Transverse colon (tissue), 4 donors: ENCODE measurements at regions of chr3 and their contacts with region 1.

Region 1: GRCh38 chr3:52231502-52232293 is 6.3 kb upstream of the TLR9 start:
- DNase-seq: peak; percentile 86
- H3K4me3 ChIP-seq: no peak overlapping the region
- H3K27ac ChIP-seq: no peak overlapping the region
- H3K4me1 ChIP-seq: peaks cover 4 to 10% (median 7%) of the 10 kb centered on the region in 4 donors
- H3K27me3 ChIP-seq: no peaks in the 10 kb centered on the region
- CTCF ChIP-seq: peak; percentile 89 to 95 (median 93)
- EP300 ChIP-seq: no peak
- POLR2A ChIP-seq: no peak

Region 2: DNA sequence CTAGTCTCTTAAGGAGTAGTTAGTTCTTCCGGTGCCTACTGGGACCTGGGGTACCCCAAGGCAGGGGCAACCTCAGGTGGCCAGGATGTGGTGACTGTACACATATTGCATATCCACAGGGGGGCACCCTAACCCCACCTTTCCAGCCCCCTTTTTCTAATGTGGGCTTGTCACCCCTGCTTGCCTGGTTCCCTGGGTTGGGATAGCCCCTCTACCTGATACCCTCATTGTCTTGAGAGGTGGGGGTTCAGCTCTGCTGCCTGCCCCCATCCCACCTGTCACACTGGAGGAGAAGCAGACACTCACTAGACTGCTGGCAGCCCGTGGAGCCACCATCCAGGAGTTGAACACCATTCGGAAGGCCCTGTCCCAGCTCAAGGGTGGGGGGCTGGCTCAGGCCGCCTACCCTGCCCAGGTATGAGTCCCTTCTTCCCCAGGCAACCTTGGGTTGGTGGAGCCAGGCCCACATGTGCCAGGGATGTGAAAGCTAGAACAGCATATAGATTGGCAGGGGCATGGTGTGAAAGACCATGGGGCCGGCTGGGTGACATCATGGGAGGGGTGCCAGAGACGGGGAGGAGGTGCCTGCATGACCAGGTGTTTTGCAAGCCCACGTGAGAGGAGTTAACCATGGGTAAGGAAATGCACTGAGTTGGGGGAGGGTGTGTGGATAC is 59.9 kb after region 1 on chr3:
- in situ Hi-C with region 1: loop called in 2 of 4 experiments (anchors 5 to 10 kb)
- intact Hi-C with region 1: no loop called
- DNase-seq: peak; percentile 41
- H3K4me3 ChIP-seq: peak overlapping the region in 1 of 4 donors; percentile 37
- H3K27ac ChIP-seq: no peak overlapping the region
- H3K4me1 ChIP-seq: peaks cover 16 to 29% (median 26%) of the 10 kb centered on the region in 4 donors
- H3K27me3 ChIP-seq: no peaks in the 10 kb centered on the region
- CTCF ChIP-seq: peak; percentile 35 to 61 (median 48)
- EP300 ChIP-seq: no peak
- POLR2A ChIP-seq: no peak